ENCODE measurements at regions of chr11 and their contacts with region 1.

Region 1: GRCh38 chr11:35794850-35795249 is 132.3 kb downstream of the TRIM44 start:
- DNase-seq: peak; percentile 46 to 83
- H3K4me3 ChIP-seq: no peak overlapping the region
- H3K27ac ChIP-seq: peak overlapping the region; percentile 30
- H3K4me1 ChIP-seq: peaks cover 56% of the 10 kb centered on the region
- H3K27me3 ChIP-seq: no peaks in the 10 kb centered on the region
- CTCF ChIP-seq: no peak

Region 2: GRCh38 chr11:35593143-35593542 is 201.7 kb before region 1 on chr11:
- CTCF ChIA-PET with region 1: no interaction called
- POLR2A ChIA-PET with region 1: interaction called, 11 read pairs
- intact Hi-C with region 1: no loop called
- DNase-seq: peak; percentile 75 to 90
- H3K4me3 ChIP-seq: no peak overlapping the region
- H3K27ac ChIP-seq: peak overlapping the region; percentile 5
- H3K4me1 ChIP-seq: peaks cover 18% of the 10 kb centered on the region
- H3K27me3 ChIP-seq: no peaks in the 10 kb centered on the region
- CTCF ChIP-seq: no peak

Region 3: DNA sequence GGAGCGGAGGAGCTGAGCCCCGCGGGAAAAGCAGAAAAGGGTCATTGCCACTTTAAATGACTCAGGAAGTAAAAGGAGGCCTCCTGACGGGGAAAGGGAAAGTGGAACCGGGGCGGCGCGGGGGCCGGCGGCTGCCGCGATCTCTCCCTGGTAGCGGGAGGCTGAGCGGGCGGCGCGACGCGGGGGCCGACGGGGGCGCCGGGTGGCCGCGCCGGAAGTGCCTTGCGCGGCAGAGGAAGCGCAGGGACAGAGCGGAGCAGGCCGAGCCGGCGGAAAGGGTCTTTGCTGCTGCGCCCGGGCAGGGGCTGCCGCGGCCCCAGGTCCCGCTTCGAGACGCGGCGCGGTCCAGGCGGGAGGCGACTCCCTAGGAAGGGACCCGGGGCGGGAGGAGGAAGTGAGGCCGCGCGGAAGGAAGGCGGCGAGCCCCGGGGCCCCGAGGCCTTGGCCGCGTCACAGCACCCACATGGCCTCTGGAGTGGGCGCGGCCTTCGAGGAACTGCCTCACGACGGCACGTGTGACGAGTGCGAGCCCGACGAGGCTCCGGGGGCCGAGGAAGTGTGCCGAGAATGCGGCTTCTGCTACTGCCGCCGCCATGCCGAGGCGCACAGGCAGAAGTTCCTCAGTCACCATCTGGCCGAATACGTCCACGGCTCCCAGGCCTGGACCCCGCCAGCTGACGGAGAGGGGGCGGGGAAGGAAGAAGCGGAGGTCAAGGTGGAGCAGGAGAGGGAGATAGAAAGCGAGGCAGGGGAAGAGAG is 132.0 kb before region 1 on chr11 and contains the start of gene TRIM44:
- CTCF ChIA-PET with region 1: no interaction called
- POLR2A ChIA-PET with region 1: no interaction called
- intact Hi-C with region 1: loop called (anchors 5 kb)
- DNase-seq: peak; percentile 81 to 89
- H3K4me3 ChIP-seq: peak within 1 kb of the TSS; percentile 88
- H3K27ac ChIP-seq: peak within 1 kb of the TSS; percentile 89
- H3K4me1 ChIP-seq: peaks cover 47% of the 10 kb centered on the region
- H3K27me3 ChIP-seq: no peaks in the 10 kb centered on the region
- CTCF ChIP-seq: no peak
- total RNA-seq, gene TRIM44: 91.7 and 100 TPM in 2 replicates

Region 4: DNA sequence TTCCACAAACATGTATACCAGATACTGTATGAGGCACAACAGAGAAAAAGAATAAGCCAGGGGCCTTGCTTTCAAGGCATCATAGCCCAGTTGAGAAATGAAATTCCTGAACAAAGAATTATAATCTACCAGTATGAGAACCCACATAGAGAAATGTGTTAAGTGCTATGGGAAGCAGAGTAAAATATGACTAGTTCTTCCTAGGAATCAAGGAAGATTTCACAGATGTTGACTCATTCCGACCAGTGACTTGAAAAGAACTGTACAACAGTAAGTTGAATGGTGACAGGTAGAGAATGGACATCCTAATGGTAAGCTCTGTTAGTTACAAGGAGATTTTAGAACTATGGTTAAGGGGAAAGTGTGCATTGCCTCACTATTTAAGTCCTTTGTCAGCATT is 29.6 kb before region 1 on chr11:
- CTCF ChIA-PET with region 1: no interaction called
- POLR2A ChIA-PET with region 1: interaction called, 12 read pairs
- intact Hi-C with region 1: no loop called
- DNase-seq: no peak
- H3K4me3 ChIP-seq: no peak overlapping the region
- H3K27ac ChIP-seq: no peak overlapping the region
- H3K4me1 ChIP-seq: no peaks in the 10 kb centered on the region
- H3K27me3 ChIP-seq: no peaks in the 10 kb centered on the region
- CTCF ChIP-seq: no peak

Region 5: GRCh38 chr11:35878741-35879140 is 83.9 kb after region 1 on chr11:
- CTCF ChIA-PET with region 1: no interaction called
- POLR2A ChIA-PET with region 1: no interaction called
- intact Hi-C with region 1: no loop called
- DNase-seq: no peak
- H3K4me3 ChIP-seq: no peak overlapping the region
- H3K27ac ChIP-seq: no peak overlapping the region
- H3K4me1 ChIP-seq: no peaks in the 10 kb centered on the region
- H3K27me3 ChIP-seq: no peaks in the 10 kb centered on the region
- CTCF ChIP-seq: no peak